ENCODE measurements at regions of chr2 and their contacts with region 1.

Region 1: GRCh38 chr2:9813312-9814133 is 29.8 kb upstream of the TAF1B start:
- DNase-seq: peak; percentile 89
- CTCF ChIP-seq: peak; percentile 94

Region 2: GRCh38 chr2:9757501-9758264 is 55.8 kb before region 1 on chr2:
- CTCF ChIA-PET with region 1: no interaction called
- POLR2A ChIA-PET with region 1: no interaction called
- DNase-seq: no peak
- CTCF ChIP-seq: no peak

Region 3: DNA sequence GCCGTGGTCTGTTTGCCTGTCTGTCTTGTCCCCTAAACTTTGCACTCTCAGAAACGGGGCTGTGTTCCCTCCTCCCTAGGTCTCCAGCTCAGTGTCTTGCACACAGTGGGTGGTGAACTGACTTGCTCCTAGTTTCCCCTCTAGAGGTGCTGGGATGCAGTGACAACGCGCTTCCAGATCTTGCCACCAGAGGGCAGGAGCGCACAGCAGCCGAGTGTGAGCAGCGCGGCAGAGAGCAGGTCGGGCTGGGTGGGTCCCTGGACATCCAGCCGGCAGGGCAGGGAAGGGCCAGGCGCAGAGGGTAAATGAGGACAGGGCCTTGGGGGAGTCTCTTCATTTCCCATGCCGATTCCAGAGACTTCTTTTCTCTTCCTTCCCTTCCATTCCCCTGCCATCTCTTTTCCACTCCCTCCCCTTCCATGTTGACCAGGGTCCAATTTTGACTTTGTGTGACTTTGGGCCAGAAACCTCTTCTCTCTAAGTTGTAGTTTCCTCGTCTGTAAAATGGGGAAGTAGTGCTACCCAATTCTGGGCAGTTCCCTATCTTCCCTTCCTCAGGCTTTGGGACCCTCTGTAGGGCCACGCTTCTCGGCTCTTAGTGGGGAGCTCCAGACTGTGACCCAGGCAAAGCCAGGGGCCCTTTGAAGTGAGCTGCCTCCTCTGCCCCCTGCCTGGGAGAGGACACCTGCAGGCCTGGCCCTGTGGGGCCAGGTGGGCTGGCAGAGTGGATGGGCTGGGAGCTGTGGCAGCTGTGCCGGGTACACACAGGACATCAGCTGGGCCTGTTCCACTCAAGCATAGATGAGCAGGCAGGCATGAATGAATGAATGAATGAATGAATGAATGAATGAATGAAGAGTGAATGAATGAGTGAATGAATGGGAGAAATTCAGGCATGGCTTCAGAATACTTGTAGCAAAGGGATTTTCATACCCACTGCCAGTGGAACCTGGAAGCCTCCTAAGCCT is 13.6 kb before region 1 on chr2:
- CTCF ChIA-PET with region 1: interaction called, 126 read pairs
- POLR2A ChIA-PET with region 1: no interaction called
- DNase-seq: peak; percentile 89
- CTCF ChIP-seq: peak; percentile 99

Region 4: GRCh38 chr2:9836524-9836923 is 23.0 kb after region 1 on chr2:
- CTCF ChIA-PET with region 1: interaction called, 39 read pairs
- POLR2A ChIA-PET with region 1: no interaction called
- DNase-seq: no peak
- CTCF ChIP-seq: no peak

Region 5: DNA sequence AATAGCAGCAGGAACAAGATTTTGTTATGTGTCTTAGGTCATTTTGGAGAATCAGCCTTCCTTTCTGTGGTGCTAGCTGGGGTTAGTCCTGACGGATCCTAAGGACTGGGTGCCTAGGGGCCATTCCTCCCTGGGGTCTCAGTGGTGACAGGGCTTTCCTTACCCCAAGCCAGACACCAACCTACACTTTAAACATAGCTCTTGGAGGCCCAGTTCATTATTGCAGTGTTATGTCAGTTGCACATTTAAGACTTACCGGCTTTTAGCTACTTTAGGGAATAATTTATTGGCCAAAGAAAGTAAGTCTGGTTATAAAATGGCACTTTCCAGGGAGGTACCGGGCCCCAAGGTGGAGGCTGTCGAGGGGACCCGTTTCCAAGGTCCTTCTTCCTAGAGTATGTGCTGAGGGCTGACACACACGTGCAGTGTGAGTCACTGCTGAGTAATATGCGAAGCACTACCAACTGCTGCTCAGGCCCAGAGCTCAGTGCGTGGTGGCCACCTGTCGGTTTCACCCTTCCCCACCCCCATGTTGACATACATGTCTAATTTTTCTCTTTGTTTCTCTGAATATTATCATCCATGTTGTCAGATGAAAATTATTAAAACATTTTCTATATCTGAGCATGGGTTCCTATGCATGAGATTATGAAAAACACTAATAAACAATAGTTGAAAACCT is 101.0 kb after region 1 on chr2:
- CTCF ChIA-PET with region 1: interaction called, 41 read pairs
- POLR2A ChIA-PET with region 1: no interaction called
- DNase-seq: peak; percentile 71
- CTCF ChIP-seq: peak; percentile 53

Region 6: GRCh38 chr2:10028988-10029874 is 215.7 kb after region 1 on chr2:
- CTCF ChIA-PET with region 1: interaction called, 30 read pairs
- POLR2A ChIA-PET with region 1: no interaction called
- DNase-seq: peak; percentile 87
- CTCF ChIP-seq: no peak

Region 7: DNA sequence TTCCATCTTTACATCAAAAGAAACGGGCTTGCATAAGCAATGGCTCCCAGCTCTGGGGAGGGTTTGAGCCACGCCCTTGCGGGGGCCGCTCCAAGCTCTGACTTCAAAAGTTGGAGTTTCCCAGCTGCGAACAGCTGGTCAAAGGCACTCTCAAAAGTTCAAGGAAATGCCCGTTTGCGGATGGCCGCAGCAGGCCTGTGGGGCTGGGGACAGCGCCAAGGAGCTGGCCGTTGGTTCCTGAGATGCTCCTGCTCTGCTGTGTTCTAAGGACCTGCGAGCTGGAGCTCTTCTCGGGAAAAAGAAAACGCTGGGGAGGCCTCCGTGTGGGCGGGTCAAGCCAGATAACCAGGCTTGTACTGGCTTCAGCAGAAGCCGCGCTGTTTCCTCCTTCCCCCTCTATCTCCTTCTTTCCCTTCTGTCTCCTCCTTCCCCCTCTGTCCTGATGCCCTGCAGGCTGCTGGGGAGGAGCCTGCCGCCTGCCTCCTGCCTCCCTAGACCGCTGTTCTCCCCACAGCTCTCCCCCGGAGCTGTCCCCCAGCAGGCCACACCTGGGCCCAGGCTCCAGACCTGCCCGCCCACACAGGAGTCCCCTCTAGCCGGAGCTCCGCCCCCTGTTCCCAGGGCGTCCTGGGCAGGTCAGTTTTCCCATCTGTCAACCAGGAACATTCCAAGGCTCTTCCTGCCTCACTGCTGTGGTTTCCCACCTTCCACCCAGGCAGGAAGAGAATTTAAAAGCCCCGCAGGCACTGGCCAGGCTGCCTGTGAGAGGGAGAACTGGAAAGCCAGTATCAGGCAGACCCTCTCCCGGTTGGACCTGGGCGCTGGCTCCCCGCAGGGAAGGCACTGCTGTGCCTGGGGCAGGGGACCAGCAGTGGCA is 243.9 kb after region 1 on chr2:
- CTCF ChIA-PET with region 1: interaction called, 93 read pairs
- POLR2A ChIA-PET with region 1: no interaction called
- DNase-seq: peak; percentile 65
- CTCF ChIP-seq: no peak

Region 8: GRCh38 chr2:10369269-10370255 is 556.0 kb after region 1 on chr2:
- CTCF ChIA-PET with region 1: no interaction called
- POLR2A ChIA-PET with region 1: no interaction called
- DNase-seq: no peak
- CTCF ChIP-seq: no peak

Measured in GM10248 (cell line).